Activated CD4-positive, alpha-beta T cell treated with anti-CD3 and anti-CD28 coated beads for 36 hours (primary cell): ENCODE measurements at regions of chr14 and their contacts with region 1.

Region 1: GRCh38 chr14:21917699-21918436 is 244.2 kb upstream of the OR4E1 start:
- DNase-seq: peak; percentile 74
- ATAC-seq: peak; percentile 57
- H3K4me3 Mint-ChIP-seq: peak overlapping the region; percentile 65
- H3K27ac Mint-ChIP-seq: peak overlapping the region; percentile 69
- H3K4me1 Mint-ChIP-seq: peaks cover 57% of the 10 kb centered on the region
- H3K27me3 Mint-ChIP-seq: no peaks in the 10 kb centered on the region

Region 2: GRCh38 chr14:21852061-21852664 is 65.7 kb before region 1 on chr14:
- CTCF ChIA-PET with region 1: interaction called, 16 read pairs
- POLR2A ChIA-PET with region 1: no interaction called
- intact Hi-C with region 1: no loop called
- DNase-seq: peak; percentile 87
- ATAC-seq: peak; percentile 73
- H3K4me3 Mint-ChIP-seq: peak overlapping the region; percentile 69
- H3K27ac Mint-ChIP-seq: peak overlapping the region; percentile 81
- H3K4me1 Mint-ChIP-seq: peaks cover 14% of the 10 kb centered on the region
- H3K27me3 Mint-ChIP-seq: peaks cover 8% of the 10 kb centered on the region

Region 3: DNA sequence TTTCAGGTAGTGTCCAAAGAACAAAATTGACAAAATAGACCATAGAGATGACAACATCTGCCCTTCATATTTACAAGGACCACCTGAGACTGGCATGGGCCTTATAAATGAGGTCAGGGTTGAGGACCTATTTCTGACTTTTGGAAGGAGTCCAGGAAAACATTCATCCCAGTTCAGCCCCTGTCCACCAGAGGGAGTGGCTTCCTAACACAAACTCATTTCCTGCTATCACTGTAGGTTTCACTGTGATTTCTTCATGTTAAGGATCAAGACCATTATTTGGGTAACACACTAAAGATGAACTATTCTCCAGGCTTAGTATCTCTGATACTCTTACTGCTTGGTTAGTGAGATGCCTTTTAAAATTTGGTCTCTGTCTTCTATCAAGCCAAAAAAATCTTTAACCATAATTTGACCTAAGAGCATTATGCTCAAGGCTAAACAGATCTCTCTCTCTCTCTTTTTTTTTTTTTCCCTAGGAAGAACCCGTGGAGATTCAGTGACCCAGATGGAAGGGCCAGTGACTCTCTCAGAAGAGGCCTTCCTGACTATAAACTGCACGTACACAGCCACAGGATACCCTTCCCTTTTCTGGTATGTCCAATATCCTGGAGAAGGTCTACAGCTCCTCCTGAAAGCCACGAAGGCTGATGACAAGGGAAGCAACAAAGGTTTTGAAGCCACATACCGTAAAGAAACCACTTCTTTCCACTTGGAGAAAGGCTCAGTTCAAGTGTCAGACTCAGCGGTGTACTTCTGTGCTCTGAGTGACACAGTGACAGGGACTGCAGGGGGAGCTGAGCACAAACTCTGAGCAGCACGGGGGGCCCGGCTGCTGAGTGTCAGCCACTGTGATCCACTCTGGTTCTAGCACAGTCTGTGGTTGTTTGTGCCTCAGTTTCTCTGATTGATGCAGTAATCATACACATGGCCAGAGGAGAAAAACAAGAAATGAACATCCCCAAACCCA is 23.3 kb after region 1 on chr14:
- CTCF ChIA-PET with region 1: interaction called, 6 read pairs
- POLR2A ChIA-PET with region 1: no interaction called
- intact Hi-C with region 1: loop called in 1 of 2 experiments (anchors 2 kb)
- DNase-seq: peak; percentile 34
- ATAC-seq: peak; percentile 78
- H3K4me3 Mint-ChIP-seq: peak overlapping the region; percentile 68
- H3K27ac Mint-ChIP-seq: peak overlapping the region; percentile 89
- H3K4me1 Mint-ChIP-seq: peaks cover 20% of the 10 kb centered on the region
- H3K27me3 Mint-ChIP-seq: no peaks in the 10 kb centered on the region

Region 4: GRCh38 chr14:22002860-22003309 is 85.0 kb after region 1 on chr14:
- CTCF ChIA-PET with region 1: interaction called, 14 read pairs
- POLR2A ChIA-PET with region 1: no interaction called
- intact Hi-C with region 1: no loop called
- DNase-seq: peak; percentile 87
- ATAC-seq: peak; percentile 80
- H3K4me3 Mint-ChIP-seq: peak overlapping the region; percentile 80
- H3K27ac Mint-ChIP-seq: peak overlapping the region; percentile 83
- H3K4me1 Mint-ChIP-seq: peaks cover 26% of the 10 kb centered on the region
- H3K27me3 Mint-ChIP-seq: no peaks in the 10 kb centered on the region

Region 5: GRCh38 chr14:22099942-22100763 is 182.3 kb after region 1 on chr14:
- CTCF ChIA-PET with region 1: interaction called, 4 read pairs
- POLR2A ChIA-PET with region 1: no interaction called
- intact Hi-C with region 1: loop called (anchors 2 to 10 kb)
- DNase-seq: peak; percentile 77
- ATAC-seq: peak; percentile 79
- H3K4me3 Mint-ChIP-seq: no peak overlapping the region
- H3K27ac Mint-ChIP-seq: no peak overlapping the region
- H3K4me1 Mint-ChIP-seq: peaks cover 41% of the 10 kb centered on the region
- H3K27me3 Mint-ChIP-seq: no peaks in the 10 kb centered on the region

Region 6: GRCh38 chr14:22852940-22853767 is 935.3 kb after region 1 on chr14:
- CTCF ChIA-PET with region 1: interaction called, 3 read pairs
- POLR2A ChIA-PET with region 1: no interaction called
- intact Hi-C with region 1: loop called (anchors 5 to 10 kb)
- DNase-seq: peak; percentile 94
- ATAC-seq: peak; percentile 82
- H3K4me3 Mint-ChIP-seq: peak overlapping the region; percentile 69
- H3K27ac Mint-ChIP-seq: peak overlapping the region; percentile 81
- H3K4me1 Mint-ChIP-seq: peaks cover 26% of the 10 kb centered on the region
- H3K27me3 Mint-ChIP-seq: peaks cover 7% of the 10 kb centered on the region